ENCODE measurements at regions of chr3 and their contacts with region 1.

Region 1: GRCh38 chr3:35965908-35966307 is 326.6 kb downstream of the ARPP21 start:
- DNase-seq: no peak
- H3K4me3 ChIP-seq: no peak overlapping the region
- H3K27ac ChIP-seq: no peak overlapping the region
- H3K4me1 ChIP-seq: no peaks in the 10 kb centered on the region
- H3K27me3 ChIP-seq: no peaks in the 10 kb centered on the region
- CTCF ChIP-seq: peak in 4 of 6 experiments; percentile 20 to 56 (median 48)
- POLR2A ChIP-seq: no peak

Region 2: GRCh38 chr3:35772381-35773015 is 193.4 kb before region 1 on chr3:
- intact Hi-C with region 1: no loop called
- DNase-seq: no peak
- H3K4me3 ChIP-seq: no peak overlapping the region
- H3K27ac ChIP-seq: no peak overlapping the region
- H3K4me1 ChIP-seq: no peaks in the 10 kb centered on the region
- H3K27me3 ChIP-seq: no peaks in the 10 kb centered on the region
- CTCF ChIP-seq: no peak
- POLR2A ChIP-seq: no peak

Region 3: GRCh38 chr3:36697229-36698001 is 731.5 kb after region 1 on chr3:
- intact Hi-C with region 1: loop called (anchors 10 kb)
- DNase-seq: no peak
- H3K4me3 ChIP-seq: no peak overlapping the region
- H3K27ac ChIP-seq: no peak overlapping the region
- H3K4me1 ChIP-seq: no peaks in the 10 kb centered on the region
- H3K27me3 ChIP-seq: no peaks in the 10 kb centered on the region
- CTCF ChIP-seq: no peak
- POLR2A ChIP-seq: no peak

Measured in thyroid gland (tissue), 4 donors.